ENCODE measurements at regions of chr3 and their contacts with region 1.

Region 1: DNA sequence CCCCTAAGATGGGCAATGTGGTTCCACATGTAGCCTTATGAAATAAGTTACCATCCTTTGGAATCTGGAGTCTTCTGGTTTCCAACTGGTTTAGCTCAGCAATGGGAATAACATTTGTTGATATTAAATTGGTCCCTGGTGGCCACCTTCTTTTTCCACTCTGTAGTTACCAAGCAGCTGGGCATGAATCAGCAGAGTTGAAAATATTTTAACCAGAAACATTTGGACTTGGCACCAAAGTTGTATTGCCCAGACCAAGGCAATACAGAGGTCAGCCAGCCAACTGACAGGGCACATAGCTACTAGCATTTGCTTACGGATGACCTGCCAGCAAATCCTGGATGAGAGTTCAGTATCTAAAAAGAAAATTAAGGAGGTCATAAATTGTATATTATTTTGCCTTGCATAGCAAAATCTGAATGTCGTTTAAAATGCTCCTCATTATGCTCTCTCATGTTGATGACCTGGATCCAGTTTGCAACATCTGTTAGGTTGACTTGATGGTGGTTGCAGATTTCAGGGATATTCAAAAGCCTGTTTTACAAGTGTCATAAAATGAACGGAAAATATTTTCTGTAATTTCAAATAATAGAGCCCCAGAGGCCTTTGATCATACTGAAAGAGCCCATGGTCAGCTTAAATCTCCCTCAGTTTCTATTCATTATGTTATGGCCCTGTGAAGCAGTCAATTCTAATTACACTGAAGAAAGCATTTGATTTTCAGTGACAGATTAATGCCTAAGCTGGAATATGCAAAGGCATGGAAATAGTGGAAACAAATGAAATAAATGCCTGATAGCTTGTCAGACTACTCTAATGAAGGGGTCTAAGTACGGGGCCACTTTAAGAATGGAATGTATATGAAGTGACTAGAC is 54.6 kb downstream of the PPM1L start:
- DNase-seq: peak; percentile 66 to 67
- ATAC-seq: peak; percentile 53 to 57
- H3K4me3 ChIP-seq: no peak overlapping the region
- H3K27ac ChIP-seq: peak overlapping the region; percentile 91 to 94 (median 92)
- H3K4me1 ChIP-seq: peaks cover 79 to 82% of the 10 kb centered on the region in 2 donors
- H3K27me3 ChIP-seq: no peaks in the 10 kb centered on the region
- CTCF ChIP-seq: peak in 1 of 5 experiments; percentile 5
- POLR2A ChIP-seq: no peak

Region 2: DNA sequence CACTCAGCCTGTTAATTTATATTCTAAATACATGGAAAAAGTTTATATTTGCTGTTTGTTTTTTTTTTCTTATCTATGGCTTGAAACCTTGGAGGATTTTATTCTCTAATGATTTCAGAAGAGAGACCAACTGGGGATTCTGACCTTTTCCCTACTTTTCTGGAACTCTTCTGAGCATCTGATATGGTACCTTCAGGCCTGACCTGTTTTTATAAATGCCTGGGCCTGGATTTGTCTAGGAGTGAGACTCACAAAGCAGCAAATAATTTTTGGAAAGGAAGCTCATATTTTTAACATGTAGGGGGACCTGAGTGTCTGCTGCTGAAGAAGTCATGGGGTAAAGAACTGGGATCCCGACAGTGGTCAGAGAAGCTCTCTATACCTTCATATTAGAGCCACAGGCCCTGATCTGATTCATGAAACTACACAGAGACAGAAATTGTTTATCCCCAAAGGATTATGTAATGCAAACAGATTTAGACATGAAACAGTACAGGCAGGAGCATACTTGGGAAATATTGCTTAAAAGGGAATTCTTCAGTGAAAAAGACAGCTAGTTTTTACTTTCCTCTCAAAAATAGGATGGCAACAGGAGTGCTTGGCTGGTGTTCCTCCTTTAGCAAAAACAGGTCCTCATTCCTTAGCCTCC is 38.7 kb before region 1 on chr3:
- in situ Hi-C with region 1: no loop called
- intact Hi-C with region 1: no loop called
- DNase-seq: no peak
- ATAC-seq: peak in 1 of 2 donors; percentile 43
- H3K4me3 ChIP-seq: no peak overlapping the region
- H3K27ac ChIP-seq: peak overlapping the region; percentile 37 to 71 (median 46)
- H3K4me1 ChIP-seq: peaks cover 63 to 70% of the 10 kb centered on the region in 2 donors
- H3K27me3 ChIP-seq: no peaks in the 10 kb centered on the region
- CTCF ChIP-seq: no peak
- POLR2A ChIP-seq: no peak

Region 3: GRCh38 chr3:160869818-160870217 is 59.2 kb after region 1 on chr3:
- in situ Hi-C with region 1: loop called in 1 of 4 experiments (anchors 10 kb)
- intact Hi-C with region 1: loop called (anchors 1 kb)
- DNase-seq: peak; percentile 92 to 93
- ATAC-seq: peak; percentile 94 to 95
- H3K4me3 ChIP-seq: peak overlapping the region; percentile 41 to 50 (median 46)
- H3K27ac ChIP-seq: peak overlapping the region; percentile 89 to 92 (median 91)
- H3K4me1 ChIP-seq: peaks cover 76 to 77% of the 10 kb centered on the region in 2 donors
- H3K27me3 ChIP-seq: no peaks in the 10 kb centered on the region
- CTCF ChIP-seq: no peak
- POLR2A ChIP-seq: peak in 1 of 2 donors; percentile 11